Activated CD8-positive, alpha-beta memory T cell treated with anti-CD3 and anti-CD28 coated beads, Interleukin-2, amount 10 ng/mL, durations not matched to agents 7 days and 5 days (primary cell): ENCODE measurements at regions of chr15 and their contacts with region 1.

Region 1: GRCh38 chr15:34514251-34514670 is 69.2 kb downstream of the GOLGA8B start:
- DNase-seq: peak; percentile 51
- ATAC-seq: peak; percentile 78
- H3K4me3 Mint-ChIP-seq: peak overlapping the region; percentile 77
- H3K27ac Mint-ChIP-seq: no peak overlapping the region
- H3K4me1 Mint-ChIP-seq: peaks cover 25% of the 10 kb centered on the region
- H3K27me3 Mint-ChIP-seq: peaks cover 59% of the 10 kb centered on the region

Region 2: DNA sequence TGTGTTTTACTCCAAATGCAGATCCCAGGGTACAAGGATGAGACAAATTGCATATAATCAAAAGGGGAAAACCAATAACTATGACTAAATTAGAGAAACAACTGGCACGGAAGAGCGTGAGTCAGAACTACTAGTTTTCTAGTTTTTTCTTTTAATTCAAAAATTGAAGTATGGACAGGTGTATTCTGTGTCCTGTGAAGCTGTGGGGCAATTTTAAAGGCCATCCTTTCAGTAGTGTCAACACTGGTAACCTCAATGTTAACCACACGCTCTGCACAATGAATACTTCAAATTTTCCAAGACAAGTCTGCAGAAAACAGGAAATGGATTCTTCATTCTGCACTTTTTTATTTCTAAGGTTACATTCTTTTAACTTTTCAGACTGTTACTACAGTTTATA is 44.2 kb before region 1 on chr15:
- CTCF ChIA-PET with region 1: no interaction called
- DNase-seq: no peak
- ATAC-seq: no peak
- H3K4me3 Mint-ChIP-seq: no peak overlapping the region
- H3K27ac Mint-ChIP-seq: no peak overlapping the region
- H3K4me1 Mint-ChIP-seq: peaks cover 15% of the 10 kb centered on the region
- H3K27me3 Mint-ChIP-seq: peaks cover 20% of the 10 kb centered on the region

Region 3: DNA sequence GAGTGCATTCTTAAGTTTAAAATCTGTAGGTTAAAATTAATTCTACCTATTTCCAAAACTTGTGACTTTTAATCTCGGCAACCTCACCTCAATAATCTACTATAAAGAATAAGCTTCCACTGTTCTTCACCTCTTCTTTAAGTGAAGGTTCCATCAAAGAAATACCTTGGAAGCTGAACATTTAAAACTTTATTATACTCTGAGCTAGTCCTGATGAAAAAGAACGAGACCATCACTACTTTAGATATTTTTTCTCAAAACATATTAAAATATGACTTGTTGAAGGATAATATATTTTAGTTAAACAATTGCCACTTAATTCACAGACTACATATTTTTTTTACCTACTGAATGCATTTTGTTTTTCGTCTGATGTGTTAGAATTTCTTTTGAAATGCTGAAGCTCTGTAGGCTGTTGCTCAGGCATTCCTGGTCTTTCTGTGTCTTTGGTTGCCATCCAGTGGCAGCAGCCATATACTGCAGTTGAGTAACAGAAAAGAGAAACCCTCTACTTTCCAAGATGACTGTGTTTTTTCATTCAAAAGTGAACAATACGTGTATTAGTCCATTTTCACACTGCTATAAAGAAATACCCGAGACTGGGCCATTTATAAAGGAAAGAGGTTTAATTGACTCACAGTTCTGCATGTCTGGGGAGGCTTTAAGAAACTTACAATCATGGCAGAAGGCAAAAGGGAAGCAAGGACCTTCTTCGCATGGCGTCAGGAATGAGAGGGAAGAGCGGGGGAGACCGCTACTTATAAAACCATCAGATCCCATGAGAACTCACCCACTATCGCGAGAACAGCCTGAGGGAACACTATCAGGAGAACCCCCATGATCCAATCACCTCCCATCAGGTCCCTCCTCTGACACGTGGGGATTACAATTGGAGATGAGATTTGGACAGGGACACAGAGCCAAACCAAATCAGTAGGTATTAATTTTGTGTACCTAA is 73.7 kb after region 1 on chr15:
- CTCF ChIA-PET with region 1: interaction called, 12 read pairs
- DNase-seq: peak; percentile 80
- ATAC-seq: peak; percentile 42
- H3K4me3 Mint-ChIP-seq: peak overlapping the region; percentile 77
- H3K27ac Mint-ChIP-seq: peak overlapping the region; percentile 63
- H3K4me1 Mint-ChIP-seq: peaks cover 17% of the 10 kb centered on the region
- H3K27me3 Mint-ChIP-seq: peaks cover 22% of the 10 kb centered on the region